ENCODE measurements at regions of chr3 and their contacts with region 1.

Region 1: DNA sequence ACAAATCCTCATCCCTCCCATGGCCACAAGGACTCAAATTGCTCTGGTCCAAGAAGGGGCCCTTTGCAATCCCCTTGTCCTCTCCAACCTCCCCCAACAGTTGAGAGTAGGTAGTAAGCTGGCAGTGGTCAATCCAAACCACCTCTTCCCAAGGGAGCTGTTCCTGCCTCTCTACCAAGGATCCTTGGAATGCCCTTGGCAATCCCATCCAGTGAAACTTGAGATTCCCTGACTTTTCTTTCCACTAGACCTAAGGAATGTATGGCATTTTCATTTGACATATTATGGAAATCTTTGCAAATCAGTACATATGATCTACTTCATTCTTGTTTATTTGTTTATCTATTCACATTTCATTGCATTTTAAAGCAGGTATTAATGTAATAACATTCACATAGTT is 4.8 kb upstream of the RBP2 start:
- DNase-seq: no peak
- H3K4me3 ChIP-seq: no peak overlapping the region
- H3K27ac ChIP-seq: no peak overlapping the region
- H3K4me1 ChIP-seq: no peaks in the 10 kb centered on the region
- H3K27me3 ChIP-seq: no peaks in the 10 kb centered on the region
- CTCF ChIP-seq: no peak
- POLR2A ChIP-seq: no peak

Region 2: DNA sequence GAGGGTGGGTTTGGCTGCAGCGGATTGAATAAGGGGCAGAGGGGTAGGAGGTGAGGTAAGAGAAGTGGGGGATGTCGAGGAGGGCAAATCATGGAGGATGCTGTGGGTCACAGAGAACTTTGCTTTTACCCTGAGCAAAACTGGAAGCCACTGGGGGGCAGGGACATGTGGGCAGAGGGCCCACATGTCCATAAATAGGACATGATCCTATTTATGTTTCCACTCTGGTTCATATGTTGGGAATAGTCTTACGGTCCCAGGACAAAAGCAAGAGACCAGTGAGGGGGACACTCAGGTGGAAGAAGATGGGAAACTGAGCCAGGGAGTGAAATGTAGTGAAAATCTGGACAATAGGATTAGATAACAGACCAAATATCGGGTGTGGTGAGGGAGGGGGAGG is 222.8 kb before region 1 on chr3:
- intact Hi-C with region 1: loop called (anchors 5 kb)
- DNase-seq: no peak
- H3K4me3 ChIP-seq: no peak overlapping the region
- H3K27ac ChIP-seq: no peak overlapping the region
- H3K4me1 ChIP-seq: no peaks in the 10 kb centered on the region
- H3K27me3 ChIP-seq: no peaks in the 10 kb centered on the region
- CTCF ChIP-seq: no peak
- POLR2A ChIP-seq: no peak

Region 3: DNA sequence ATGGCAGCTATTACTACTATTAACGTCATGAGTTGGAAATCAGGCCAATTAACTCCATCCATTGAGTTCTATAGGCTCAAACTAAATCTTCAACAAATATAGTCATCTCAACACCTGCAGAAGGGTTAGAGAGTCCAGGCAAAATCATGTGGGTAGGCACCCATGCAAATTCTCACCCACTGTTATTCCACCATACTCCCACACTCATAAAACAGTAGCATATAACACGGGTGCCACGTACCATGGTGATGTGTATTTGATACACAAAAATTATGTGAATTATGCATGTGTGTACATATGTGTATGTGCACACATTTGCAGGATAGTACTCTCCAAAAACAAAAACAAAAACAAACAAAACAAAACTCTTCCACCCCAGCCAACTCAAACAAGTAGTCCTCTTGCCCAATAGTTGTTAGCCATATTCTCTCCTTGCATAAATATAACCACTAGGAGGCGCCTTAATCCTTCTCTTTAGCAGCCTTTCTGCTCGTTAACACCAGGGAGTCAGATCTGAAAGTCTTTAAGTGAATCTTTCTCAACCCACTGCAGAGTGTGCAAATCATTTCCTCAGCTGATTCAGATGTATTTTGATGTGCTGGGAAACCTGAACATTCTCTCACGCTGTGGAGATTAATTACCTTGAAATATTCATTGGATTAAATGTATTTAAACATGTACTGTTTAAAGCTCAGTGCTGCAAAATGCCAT is 53.7 kb before region 1 on chr3:
- intact Hi-C with region 1: no loop called
- DNase-seq: no peak
- H3K4me3 ChIP-seq: no peak overlapping the region
- H3K27ac ChIP-seq: no peak overlapping the region
- H3K4me1 ChIP-seq: no peaks in the 10 kb centered on the region
- H3K27me3 ChIP-seq: no peaks in the 10 kb centered on the region
- CTCF ChIP-seq: peak; percentile 81 to 86 (median 84)
- POLR2A ChIP-seq: no peak

Measured in breast epithelium (tissue), 4 donors.